T-cell (primary cell): ENCODE measurements at regions of chr2 and their contacts with region 1.

Region 1: GRCh38 chr2:86623651-86624541 is at the start of gene RNF103:
- DNase-seq: peak; percentile 76 to 96 (median 88)
- ATAC-seq: peak; percentile 88 to 93 (median 90)
- H3K4me3 ChIP-seq: peak within 1 kb of the TSS; percentile 77 to 79
- H3K4me3 Mint-ChIP-seq: peak within 1 kb of the TSS; percentile 92 to 96 (median 94)
- H3K27ac ChIP-seq: peak within 1 kb of the TSS; percentile 91
- H3K27ac Mint-ChIP-seq: peak within 1 kb of the TSS; percentile 92 to 94
- H3K4me1 ChIP-seq: peaks cover 7 to 16% of the 10 kb centered on the region in 2 experiments
- H3K4me1 Mint-ChIP-seq: peaks cover 28 to 39% (median 35%) of the 10 kb centered on the region in 3 donors
- H3K27me3 ChIP-seq: no peaks in the 10 kb centered on the region
- H3K27me3 Mint-ChIP-seq: peaks cover 0 to 2% of the 10 kb centered on the region in 2 donors
- total RNA-seq, gene RNF103: 30.3 to 65.1 (median 32.7) TPM

Region 2: GRCh38 chr2:86417961-86418360 is 205.9 kb before region 1 on chr2:
- CTCF ChIA-PET with region 1: no interaction called
- POLR2A ChIA-PET with region 1: no interaction called
- DNase-seq: no peak
- ATAC-seq: no peak
- H3K4me3 ChIP-seq: no peak overlapping the region
- H3K4me3 Mint-ChIP-seq: no peak overlapping the region
- H3K27ac ChIP-seq: no peak overlapping the region
- H3K27ac Mint-ChIP-seq: no peak overlapping the region
- H3K4me1 ChIP-seq: peaks cover 0 to 2% of the 10 kb centered on the region in 2 experiments
- H3K4me1 Mint-ChIP-seq: peaks cover 0 to 6% (median 3%) of the 10 kb centered on the region in 3 donors
- H3K27me3 ChIP-seq: peaks cover 0 to 8% of the 10 kb centered on the region in 2 experiments
- H3K27me3 Mint-ChIP-seq: peaks cover 23 to 36% of the 10 kb centered on the region in 2 donors

Region 3: GRCh38 chr2:86593266-86593665 is 30.6 kb before region 1 on chr2:
- CTCF ChIA-PET with region 1: no interaction called
- POLR2A ChIA-PET with region 1: interaction called in 1 of 2 experiments, 10 read pairs
- DNase-seq: no peak
- ATAC-seq: no peak
- H3K4me3 ChIP-seq: no peak overlapping the region
- H3K4me3 Mint-ChIP-seq: no peak overlapping the region
- H3K27ac ChIP-seq: no peak overlapping the region
- H3K27ac Mint-ChIP-seq: no peak overlapping the region
- H3K4me1 ChIP-seq: no peaks in the 10 kb centered on the region
- H3K4me1 Mint-ChIP-seq: no peaks in the 10 kb centered on the region
- H3K27me3 ChIP-seq: no peaks in the 10 kb centered on the region
- H3K27me3 Mint-ChIP-seq: peaks cover 6 to 9% of the 10 kb centered on the region in 2 donors